Activated naive CD4-positive, alpha-beta T cell treated with anti-CD3 and anti-CD28 coated beads, Interleukin-2, amount 10 ng/mL, durations not matched to agents 7 days and 5 days (primary cell): ENCODE measurements at regions of chr9 and their contacts with region 1.

Region 1: DNA sequence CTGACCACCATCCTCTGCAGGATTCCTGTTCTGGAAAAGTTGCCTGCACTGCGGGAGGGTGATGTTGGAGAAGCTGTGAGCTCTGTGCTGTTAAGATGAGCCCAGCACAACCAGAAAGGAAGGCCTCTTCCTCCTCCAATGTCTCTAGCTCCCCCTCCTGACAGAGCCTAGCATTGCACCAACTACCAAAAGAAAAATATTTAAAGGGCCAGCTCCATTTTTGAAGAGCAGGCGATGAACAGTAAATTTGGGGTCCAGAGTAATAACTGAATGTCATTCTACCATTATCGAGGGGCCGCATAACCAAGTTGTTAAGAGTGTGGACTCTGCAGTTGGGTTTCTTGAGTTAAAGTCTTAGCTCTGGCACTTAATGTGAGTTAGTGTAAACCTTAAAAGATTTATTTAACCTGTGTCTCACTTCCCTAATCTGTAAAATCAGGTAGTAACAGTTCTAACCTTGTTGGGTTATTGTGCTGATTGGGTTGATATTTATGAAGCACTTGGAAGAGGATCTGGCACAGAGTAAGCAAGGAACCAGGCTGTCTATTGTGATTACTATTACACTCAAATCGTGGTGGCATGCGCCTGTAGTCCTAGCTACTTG is 3.9 kb downstream of the TEX53 start:
- DNase-seq: peak; percentile 89
- H3K4me3 Mint-ChIP-seq: no peak overlapping the region
- H3K27ac Mint-ChIP-seq: peak overlapping the region; percentile 61
- H3K4me1 Mint-ChIP-seq: peaks cover 22% of the 10 kb centered on the region
- H3K27me3 Mint-ChIP-seq: no peaks in the 10 kb centered on the region

Region 2: GRCh38 chr9:114405294-114406034 is 248.2 kb before region 1 on chr9:
- CTCF ChIA-PET with region 1: interaction called, 206 read pairs
- DNase-seq: peak; percentile 89
- H3K4me3 Mint-ChIP-seq: no peak overlapping the region
- H3K27ac Mint-ChIP-seq: no peak overlapping the region
- H3K4me1 Mint-ChIP-seq: peaks cover 5% of the 10 kb centered on the region
- H3K27me3 Mint-ChIP-seq: peaks cover 32% of the 10 kb centered on the region

Region 3: DNA sequence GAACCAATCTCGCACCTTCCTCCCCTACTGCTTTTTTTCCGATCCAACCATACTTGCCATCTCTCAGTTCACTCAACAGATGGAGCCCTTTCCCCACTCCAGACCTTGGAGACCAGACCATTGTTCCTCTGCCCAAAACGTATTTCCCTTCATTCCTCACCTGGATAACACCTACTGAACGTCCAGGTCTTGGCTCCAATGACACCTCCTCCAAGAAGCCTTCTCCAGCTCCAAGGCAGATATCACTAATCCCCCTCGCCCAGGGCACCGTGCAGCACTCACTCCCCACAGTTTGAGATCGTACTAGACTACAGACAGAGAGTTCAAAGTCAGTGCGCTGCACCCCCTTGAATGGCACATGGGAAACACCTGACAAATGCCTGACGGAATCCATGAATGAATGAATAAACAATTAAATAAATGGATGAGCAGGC is 218.8 kb before region 1 on chr9:
- CTCF ChIA-PET with region 1: interaction called, 53 read pairs
- DNase-seq: peak; percentile 30
- H3K4me3 Mint-ChIP-seq: no peak overlapping the region
- H3K27ac Mint-ChIP-seq: no peak overlapping the region
- H3K4me1 Mint-ChIP-seq: peaks cover 4% of the 10 kb centered on the region
- H3K27me3 Mint-ChIP-seq: peaks cover 7% of the 10 kb centered on the region

Region 4: GRCh38 chr9:114518599-114519022 is 135.0 kb before region 1 on chr9:
- CTCF ChIA-PET with region 1: interaction called, 14 read pairs
- DNase-seq: peak; percentile 25
- H3K4me3 Mint-ChIP-seq: no peak overlapping the region
- H3K27ac Mint-ChIP-seq: peak overlapping the region; percentile 21
- H3K4me1 Mint-ChIP-seq: peaks cover 11% of the 10 kb centered on the region
- H3K27me3 Mint-ChIP-seq: peaks cover 45% of the 10 kb centered on the region

Region 5: DNA sequence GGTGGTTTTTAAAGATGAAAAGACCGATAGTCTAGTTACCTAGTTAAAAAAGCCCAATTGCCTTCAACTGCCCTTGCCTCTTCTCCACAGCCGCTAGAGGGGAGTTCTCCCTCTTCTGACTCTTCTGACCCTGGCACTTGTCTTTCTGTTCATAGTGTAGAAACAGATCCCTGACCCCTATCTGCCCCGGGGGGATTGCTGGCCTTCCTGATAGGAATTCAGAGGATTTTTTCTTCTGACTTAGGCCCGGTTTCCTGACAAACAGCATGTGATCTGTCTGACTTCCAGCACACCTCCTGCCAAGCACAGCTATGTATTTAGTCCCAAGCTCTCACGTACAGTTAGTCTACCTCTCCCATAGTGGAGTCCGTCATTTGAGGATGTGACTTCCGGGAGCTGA is 47.6 kb before region 1 on chr9:
- CTCF ChIA-PET with region 1: interaction called, 10 read pairs
- DNase-seq: no peak
- H3K4me3 Mint-ChIP-seq: no peak overlapping the region
- H3K27ac Mint-ChIP-seq: no peak overlapping the region
- H3K4me1 Mint-ChIP-seq: peaks cover 16% of the 10 kb centered on the region
- H3K27me3 Mint-ChIP-seq: no peaks in the 10 kb centered on the region

Region 6: DNA sequence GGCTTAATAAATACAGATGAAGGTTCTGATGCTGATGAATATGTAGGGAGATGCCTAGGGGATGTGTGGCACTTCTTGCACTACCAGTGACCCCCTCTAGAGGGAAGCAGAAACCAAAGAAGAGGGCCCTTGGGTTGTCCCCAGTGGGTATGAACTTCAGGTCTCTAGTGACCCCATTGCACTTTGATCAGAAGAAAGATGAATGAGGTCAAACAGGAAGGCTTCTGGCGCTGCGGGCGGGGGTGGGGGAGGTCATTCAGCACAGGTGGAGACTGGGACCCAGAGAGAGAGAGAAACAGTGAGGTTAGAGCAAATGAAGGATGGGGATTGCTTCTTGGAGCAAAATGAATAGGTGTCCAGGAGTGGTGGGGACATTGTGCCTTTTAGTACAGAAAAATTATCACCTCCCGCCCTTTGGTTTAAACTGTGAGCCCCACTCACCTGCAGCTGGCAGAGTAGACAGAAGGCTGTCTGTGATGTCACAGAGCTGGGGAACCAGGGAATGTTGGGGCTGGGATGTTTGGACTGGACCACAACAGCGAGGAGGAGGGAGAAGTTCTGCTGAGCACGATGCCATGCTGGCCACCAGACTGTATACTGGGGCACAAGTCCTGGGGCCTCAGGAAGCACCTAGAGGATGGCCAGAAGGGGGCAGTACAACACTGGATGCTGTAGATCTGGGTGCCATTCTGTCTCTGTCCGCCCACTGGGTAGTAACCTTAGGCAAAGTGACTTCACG is 28.1 kb after region 1 on chr9 and contains the start of gene TEX48:
- CTCF ChIA-PET with region 1: interaction called, 11 read pairs
- DNase-seq: peak; percentile 88
- H3K4me3 Mint-ChIP-seq: no peak within 1 kb of the TSS
- H3K27ac Mint-ChIP-seq: peak within 1 kb of the TSS; percentile 88
- H3K4me1 Mint-ChIP-seq: peaks cover 64% of the 10 kb centered on the region
- H3K27me3 Mint-ChIP-seq: peaks cover 4% of the 10 kb centered on the region